ENCODE measurements at regions of chr11 and their contacts with region 1.

Region 1: DNA sequence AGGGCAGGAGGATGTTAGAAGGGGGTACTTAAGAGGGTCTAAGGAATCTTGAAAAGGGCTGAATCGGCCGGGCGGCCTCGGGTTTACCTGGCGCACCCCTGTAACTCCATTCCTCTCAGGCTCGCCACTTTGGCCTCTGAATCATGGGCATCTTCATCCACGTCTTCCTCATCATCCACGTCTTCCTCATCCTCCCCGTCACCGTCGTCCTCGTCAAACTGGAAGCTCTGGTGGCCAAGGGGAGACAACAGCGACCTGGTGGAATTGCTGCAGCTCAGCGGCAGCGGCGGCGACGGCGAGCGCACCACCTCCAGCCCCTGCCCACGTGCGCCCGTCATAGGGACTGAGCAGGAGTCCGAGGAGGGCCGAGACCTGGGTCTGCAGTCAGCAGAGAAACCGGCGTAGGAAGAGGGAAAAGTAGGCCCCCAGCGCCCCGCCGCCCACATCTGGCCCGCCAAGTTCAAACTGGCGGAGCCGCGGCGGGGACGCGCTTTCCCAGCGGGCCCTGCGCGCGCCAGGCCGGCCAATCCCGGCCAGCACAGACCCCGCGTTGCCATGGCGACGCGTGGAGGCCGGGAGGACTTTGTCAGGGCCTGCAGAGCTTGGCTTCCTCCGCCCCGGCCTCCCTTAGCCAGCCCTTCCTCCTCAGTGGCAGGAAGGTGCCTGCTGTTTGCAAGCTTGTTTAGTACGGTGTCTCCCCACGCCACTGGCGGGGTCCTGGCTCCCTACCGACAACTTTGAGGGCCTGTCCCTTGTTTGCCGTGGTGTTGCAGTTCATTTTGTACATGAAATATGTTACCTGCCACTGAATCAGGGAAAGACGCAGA is at the start of gene CCDC34:
- DNase-seq: peak; percentile 93 to 95
- H3K4me3 ChIP-seq: peak within 1 kb of the TSS; percentile 80
- H3K4me3 Mint-ChIP-seq: peak within 1 kb of the TSS; percentile 94
- H3K27ac Mint-ChIP-seq: peak within 1 kb of the TSS; percentile 91
- H3K4me1 ChIP-seq: peaks cover 13% of the 10 kb centered on the region
- H3K4me1 Mint-ChIP-seq: peaks cover 36% of the 10 kb centered on the region
- H3K27me3 ChIP-seq: no peaks in the 10 kb centered on the region
- H3K27me3 Mint-ChIP-seq: no peaks in the 10 kb centered on the region
- CTCF ChIP-seq: no peak
- total RNA-seq, gene CCDC34: 25.0 and 25.7 TPM in 2 replicates

Region 2: GRCh38 chr11:27201454-27202236 is 161.3 kb before region 1 on chr11:
- CTCF ChIA-PET with region 1: no interaction called
- POLR2A ChIA-PET with region 1: no interaction called
- intact Hi-C with region 1: loop called (anchors 1 kb)
- DNase-seq: peak; percentile 89 to 94
- H3K4me3 ChIP-seq: no peak overlapping the region
- H3K4me3 Mint-ChIP-seq: peak overlapping the region; percentile 63
- H3K27ac Mint-ChIP-seq: peak overlapping the region; percentile 87
- H3K4me1 ChIP-seq: peaks cover 42% of the 10 kb centered on the region
- H3K4me1 Mint-ChIP-seq: peaks cover 48% of the 10 kb centered on the region
- H3K27me3 ChIP-seq: no peaks in the 10 kb centered on the region
- H3K27me3 Mint-ChIP-seq: no peaks in the 10 kb centered on the region
- CTCF ChIP-seq: no peak

Region 3: DNA sequence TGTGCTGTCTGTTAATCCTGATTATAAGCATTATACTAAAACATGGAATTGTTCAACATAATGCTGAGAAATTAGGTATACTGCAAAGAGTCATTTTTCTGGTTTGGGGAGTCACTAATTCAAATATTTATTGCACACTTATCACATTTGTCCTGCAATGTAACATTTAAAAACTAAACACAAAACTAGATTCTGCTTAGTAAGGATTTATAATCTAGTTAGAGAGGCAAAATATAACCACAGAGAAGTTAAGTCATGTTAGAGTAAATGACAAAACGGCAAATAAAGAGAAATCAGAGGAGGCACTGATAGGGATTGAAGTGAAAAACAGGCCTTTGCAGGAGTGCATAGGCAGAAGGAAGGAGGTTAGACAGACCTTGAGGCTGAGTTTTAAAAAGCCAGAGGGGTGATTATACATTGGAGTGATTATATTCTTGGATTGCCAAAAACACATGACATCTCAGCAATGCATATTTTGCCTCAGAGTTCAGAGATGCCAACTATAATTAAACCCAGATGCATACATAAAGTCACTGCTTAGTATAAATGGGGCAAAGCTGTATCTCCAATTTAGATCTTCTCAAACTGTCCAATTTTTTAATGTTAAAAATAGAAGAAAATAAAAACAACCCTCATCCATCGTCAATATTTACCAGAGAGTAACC is 49.7 kb before region 1 on chr11:
- CTCF ChIA-PET with region 1: no interaction called
- POLR2A ChIA-PET with region 1: no interaction called
- intact Hi-C with region 1: loop called (anchors 1 kb)
- DNase-seq: no peak
- H3K4me3 ChIP-seq: no peak overlapping the region
- H3K4me3 Mint-ChIP-seq: no peak overlapping the region
- H3K27ac Mint-ChIP-seq: no peak overlapping the region
- H3K4me1 ChIP-seq: peaks cover 9% of the 10 kb centered on the region; the same call in 1 of the 2 replicates
- H3K4me1 Mint-ChIP-seq: peaks cover 10% of the 10 kb centered on the region
- H3K27me3 ChIP-seq: no peaks in the 10 kb centered on the region
- H3K27me3 Mint-ChIP-seq: no peaks in the 10 kb centered on the region
- CTCF ChIP-seq: no peak

Region 4: GRCh38 chr11:27331981-27332380 is 31.0 kb before region 1 on chr11:
- CTCF ChIA-PET with region 1: no interaction called
- POLR2A ChIA-PET with region 1: no interaction called
- intact Hi-C with region 1: no loop called
- DNase-seq: no peak
- H3K4me3 ChIP-seq: no peak overlapping the region
- H3K4me3 Mint-ChIP-seq: no peak overlapping the region
- H3K27ac Mint-ChIP-seq: peak overlapping the region; percentile 23
- H3K4me1 ChIP-seq: peaks cover 28% of the 10 kb centered on the region
- H3K4me1 Mint-ChIP-seq: peaks cover 36% of the 10 kb centered on the region
- H3K27me3 ChIP-seq: no peaks in the 10 kb centered on the region
- H3K27me3 Mint-ChIP-seq: no peaks in the 10 kb centered on the region
- CTCF ChIP-seq: no peak

Region 5: DNA sequence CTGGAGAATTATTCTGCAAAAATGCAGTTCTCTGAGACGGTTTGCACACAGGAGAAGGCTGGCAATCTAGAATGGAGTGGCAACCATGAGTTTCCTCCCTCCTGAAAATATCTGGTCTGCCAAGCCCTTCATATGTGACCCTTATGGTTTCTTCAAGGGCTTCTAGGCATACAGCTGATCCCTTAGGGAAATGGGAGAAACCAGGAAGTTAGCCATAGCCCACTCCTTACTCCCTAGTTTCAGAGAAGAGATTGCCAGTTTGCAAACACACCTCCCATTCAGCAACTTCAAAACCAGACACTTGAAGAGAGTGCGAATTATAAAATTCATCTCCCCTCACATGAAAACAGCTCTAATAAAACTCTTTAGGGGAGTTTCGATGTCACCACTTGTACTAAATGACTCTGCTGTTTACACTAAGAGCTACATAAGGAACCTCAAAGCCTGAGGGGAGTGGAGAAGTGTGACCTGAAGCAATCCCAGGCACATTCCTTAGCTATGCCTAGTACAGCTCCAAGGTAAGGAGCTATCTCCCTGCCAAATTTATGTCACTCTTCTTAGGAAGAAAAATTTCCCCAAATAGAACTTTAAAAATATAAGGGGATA is 101.3 kb after region 1 on chr11:
- CTCF ChIA-PET with region 1: no interaction called
- POLR2A ChIA-PET with region 1: no interaction called
- intact Hi-C with region 1: no loop called
- DNase-seq: peak in 1 of 2 experiments; percentile 30
- H3K4me3 ChIP-seq: no peak overlapping the region
- H3K4me3 Mint-ChIP-seq: peak overlapping the region; percentile 63
- H3K27ac Mint-ChIP-seq: peak overlapping the region; percentile 91
- H3K4me1 ChIP-seq: peaks cover 40% of the 10 kb centered on the region
- H3K4me1 Mint-ChIP-seq: peaks cover 34% of the 10 kb centered on the region
- H3K27me3 ChIP-seq: no peaks in the 10 kb centered on the region
- H3K27me3 Mint-ChIP-seq: no peaks in the 10 kb centered on the region
- CTCF ChIP-seq: no peak

Region 6: DNA sequence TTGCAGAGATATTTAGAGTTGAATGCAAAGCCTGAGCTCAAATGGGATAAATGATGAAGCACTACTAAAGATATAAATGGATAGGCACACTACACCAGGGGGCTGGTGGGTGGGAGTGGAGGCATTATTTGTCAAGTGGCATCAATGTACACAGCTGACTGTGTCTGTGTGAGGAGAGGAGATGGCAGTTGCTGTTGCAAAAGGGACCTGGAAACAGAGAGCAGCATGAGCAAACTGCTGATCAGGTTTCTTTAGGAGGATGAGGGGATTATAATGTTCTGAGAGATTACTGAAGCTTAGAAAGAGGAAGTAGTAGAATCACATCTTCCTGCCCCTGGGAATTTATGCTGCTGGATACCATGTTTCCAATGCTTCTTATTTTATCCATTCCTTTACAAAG is 183.0 kb after region 1 on chr11:
- CTCF ChIA-PET with region 1: no interaction called
- POLR2A ChIA-PET with region 1: no interaction called
- intact Hi-C with region 1: no loop called
- DNase-seq: no peak
- H3K4me3 ChIP-seq: no peak overlapping the region
- H3K4me3 Mint-ChIP-seq: no peak overlapping the region
- H3K27ac Mint-ChIP-seq: no peak overlapping the region
- H3K4me1 ChIP-seq: no peaks in the 10 kb centered on the region
- H3K4me1 Mint-ChIP-seq: no peaks in the 10 kb centered on the region
- H3K27me3 ChIP-seq: no peaks in the 10 kb centered on the region
- H3K27me3 Mint-ChIP-seq: peaks cover 16% of the 10 kb centered on the region
- CTCF ChIP-seq: no peak

Measured in Caco-2 (cell line).